Activated naive CD4-positive, alpha-beta T cell treated with anti-CD3 and anti-CD28 coated beads for 36 hours (primary cell): ENCODE measurements at regions of chr20 and their contacts with region 1.

Region 1: GRCh38 chr20:1450926-1451491 is 15.6 kb downstream of the NSFL1C start:
- DNase-seq: no peak
- H3K4me3 Mint-ChIP-seq: no peak overlapping the region
- H3K27ac Mint-ChIP-seq: no peak overlapping the region
- H3K4me1 Mint-ChIP-seq: no peaks in the 10 kb centered on the region
- H3K27me3 Mint-ChIP-seq: no peaks in the 10 kb centered on the region

Region 2: GRCh38 chr20:1029980-1030379 is 421.0 kb before region 1 on chr20:
- CTCF ChIA-PET with region 1: no interaction called
- intact Hi-C with region 1: no loop called
- DNase-seq: no peak
- H3K4me3 Mint-ChIP-seq: no peak overlapping the region
- H3K27ac Mint-ChIP-seq: no peak overlapping the region
- H3K4me1 Mint-ChIP-seq: no peaks in the 10 kb centered on the region
- H3K27me3 Mint-ChIP-seq: peaks cover 8% of the 10 kb centered on the region

Region 3: DNA sequence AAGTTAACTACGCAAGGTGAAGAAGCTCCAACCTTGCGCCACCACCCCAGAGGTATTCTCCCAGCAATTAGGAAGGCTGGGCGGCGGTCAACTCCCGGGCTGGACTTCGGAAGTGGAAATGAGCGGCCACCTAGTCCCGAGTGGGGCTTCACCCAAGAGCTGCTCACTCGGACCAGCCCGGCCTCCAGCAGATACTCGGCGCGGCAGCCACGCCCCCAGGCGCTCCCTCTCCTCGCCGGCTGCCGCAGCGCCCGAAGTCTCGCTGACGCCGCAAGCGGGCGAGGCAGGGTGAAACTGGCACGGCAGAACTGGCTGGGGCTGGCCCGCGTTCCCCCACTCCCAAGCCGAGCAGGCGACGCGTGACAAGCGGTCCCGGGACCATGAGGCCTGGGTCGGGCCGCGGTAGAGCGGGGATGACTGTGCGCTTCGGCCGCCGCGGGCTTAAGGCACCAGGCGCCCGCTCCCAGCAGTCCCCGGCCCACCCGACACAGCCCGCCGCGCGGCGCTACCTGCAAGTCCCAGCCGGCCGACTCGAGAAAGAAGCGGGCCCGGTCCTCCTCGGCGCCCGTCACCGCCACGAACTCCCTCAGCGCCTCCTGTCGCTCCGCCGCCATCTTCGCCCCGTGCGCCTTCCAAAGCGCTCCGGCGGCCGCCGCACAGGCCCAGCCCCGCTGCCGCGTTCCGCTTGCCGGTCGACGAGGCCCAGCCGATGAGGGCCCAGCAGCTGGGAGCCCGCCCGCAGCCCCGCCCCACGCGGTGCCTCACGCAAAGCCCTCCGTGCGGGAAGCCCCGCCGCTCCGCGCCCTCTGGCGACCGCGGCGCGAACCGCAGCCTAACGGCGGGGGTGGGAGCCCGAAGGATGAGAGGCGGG is 15.4 kb after region 1 on chr20 and contains the start of gene NSFL1C:
- CTCF ChIA-PET with region 1: interaction called, 10 read pairs
- intact Hi-C with region 1: no loop called
- DNase-seq: peak; percentile 97
- H3K4me3 Mint-ChIP-seq: peak within 1 kb of the TSS; percentile 80
- H3K27ac Mint-ChIP-seq: peak within 1 kb of the TSS; percentile 71
- H3K4me1 Mint-ChIP-seq: peaks cover 44% of the 10 kb centered on the region
- H3K27me3 Mint-ChIP-seq: peaks cover 6% of the 10 kb centered on the region
- total RNA-seq, gene NSFL1C: 80.4 to 84.1 TPM

Region 4: DNA sequence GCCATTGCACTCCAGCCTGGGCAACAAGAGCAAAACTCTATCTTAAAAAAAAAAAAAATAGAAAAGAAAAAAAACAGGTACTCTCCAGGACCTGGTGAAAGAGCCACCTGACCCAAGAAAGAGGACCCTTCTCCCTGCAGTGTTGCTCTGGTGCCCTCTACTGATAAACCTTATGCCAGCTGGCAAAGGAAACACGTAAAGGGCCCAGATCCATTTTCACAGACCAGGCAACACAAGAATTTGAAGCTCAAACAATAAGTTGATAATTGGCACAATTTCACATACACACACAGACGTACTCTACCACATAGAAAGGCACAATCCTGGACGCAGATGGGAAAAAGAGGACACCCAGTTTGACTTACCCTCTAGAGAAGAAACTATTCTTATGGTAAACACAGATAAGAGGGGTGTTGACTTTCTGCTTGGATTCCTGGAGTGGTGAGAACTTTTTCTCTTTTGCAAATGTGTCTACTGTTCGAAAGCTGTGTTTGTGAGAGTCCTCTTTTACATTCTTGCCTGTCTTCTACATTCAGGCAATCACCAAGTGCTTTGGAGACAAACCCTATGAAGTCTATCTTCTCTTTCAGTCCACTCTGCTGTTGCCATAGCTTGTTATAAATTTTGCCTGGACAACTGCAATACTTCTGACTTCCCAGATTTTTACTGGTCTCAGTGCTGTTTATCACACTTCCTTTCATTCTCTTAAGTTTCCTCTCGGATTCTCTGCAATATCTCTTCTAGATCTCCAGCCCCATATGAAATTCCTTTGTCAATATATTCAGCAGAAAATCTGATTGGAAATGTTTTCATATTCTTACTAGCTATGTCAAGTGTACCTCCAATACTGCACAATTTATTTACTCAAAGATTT is 1026.0 kb after region 1 on chr20:
- CTCF ChIA-PET with region 1: no interaction called
- intact Hi-C with region 1: no loop called
- DNase-seq: no peak
- H3K4me3 Mint-ChIP-seq: no peak overlapping the region
- H3K27ac Mint-ChIP-seq: no peak overlapping the region
- H3K4me1 Mint-ChIP-seq: peaks cover 5% of the 10 kb centered on the region
- H3K27me3 Mint-ChIP-seq: no peaks in the 10 kb centered on the region